ENCODE measurements at regions of chr17 and their contacts with region 1.

Region 1: GRCh38 chr17:73429440-73430164 is 117.8 kb upstream of the CDC42EP4 start:
- DNase-seq: peak; percentile 86 to 94
- H3K4me3 ChIP-seq: no peak overlapping the region
- H3K27ac ChIP-seq: no peak overlapping the region
- H3K4me1 ChIP-seq: peaks cover 0 to 19% (median 8%) of the 10 kb centered on the region in 4 donors
- H3K27me3 ChIP-seq: peaks cover 0 to 18% (median 5%) of the 10 kb centered on the region in 3 donors
- CTCF ChIP-seq: peak in 5 of 7 experiments; percentile 87 to 97 (median 90)
- EP300 ChIP-seq: no peak
- POLR2A ChIP-seq: no peak

Region 2: GRCh38 chr17:74176546-74177001 is 747.0 kb after region 1 on chr17:
- intact Hi-C with region 1: loop called (anchors 5 kb)
- DNase-seq: peak; percentile 63 to 84
- H3K4me3 ChIP-seq: no peak overlapping the region
- H3K27ac ChIP-seq: no peak overlapping the region
- H3K4me1 ChIP-seq: no peaks in the 10 kb centered on the region
- H3K27me3 ChIP-seq: peaks cover 0 to 79% (median 25%) of the 10 kb centered on the region in 3 donors
- CTCF ChIP-seq: peak in 5 of 7 experiments; percentile 35 to 78 (median 69)
- EP300 ChIP-seq: no peak
- POLR2A ChIP-seq: no peak

Measured in stomach (tissue), 19 donors.